ENCODE measurements at regions of chr4 and their contacts with region 1.

Region 1: GRCh38 chr4:119233750-119234149 is 21.2 kb downstream of the USP53 start:
- DNase-seq: no peak
- ATAC-seq: peak; percentile 55
- H3K4me3 ChIP-seq: no peak overlapping the region
- H3K4me3 Mint-ChIP-seq: peak overlapping the region; percentile 19
- H3K27ac ChIP-seq: no peak overlapping the region
- H3K27ac Mint-ChIP-seq: peak overlapping the region; percentile 66
- H3K4me1 ChIP-seq: peaks cover 18% of the 10 kb centered on the region
- H3K4me1 Mint-ChIP-seq: peaks cover 81% of the 10 kb centered on the region
- H3K27me3 ChIP-seq: no peaks in the 10 kb centered on the region
- H3K27me3 Mint-ChIP-seq: no peaks in the 10 kb centered on the region
- CTCF ChIP-seq: no peak

Region 2: DNA sequence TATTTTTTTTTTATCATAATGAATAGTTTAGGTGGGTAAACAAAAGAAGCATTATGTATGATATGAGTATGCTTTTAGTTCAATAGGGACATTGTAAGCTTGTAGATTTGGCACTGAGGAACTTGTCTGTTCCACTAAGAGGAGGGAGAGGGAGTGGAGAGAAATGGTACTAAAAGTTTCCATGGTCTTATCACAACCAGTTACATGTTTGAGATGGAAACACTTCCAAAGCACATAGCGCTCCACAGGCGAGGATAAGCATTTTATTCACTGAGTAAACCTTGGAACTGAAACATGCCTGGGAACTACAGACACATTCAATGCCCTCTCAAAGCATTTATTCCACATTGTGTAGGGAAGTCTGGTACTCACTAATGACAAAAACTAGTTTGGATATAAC is 82.6 kb before region 1 on chr4:
- CTCF ChIA-PET with region 1: no interaction called
- POLR2A ChIA-PET with region 1: no interaction called
- intact Hi-C with region 1: no loop called
- DNase-seq: no peak
- ATAC-seq: no peak
- H3K4me3 ChIP-seq: no peak overlapping the region
- H3K4me3 Mint-ChIP-seq: no peak overlapping the region
- H3K27ac ChIP-seq: no peak overlapping the region
- H3K27ac Mint-ChIP-seq: no peak overlapping the region
- H3K4me1 ChIP-seq: no peaks in the 10 kb centered on the region
- H3K4me1 Mint-ChIP-seq: no peaks in the 10 kb centered on the region
- H3K27me3 ChIP-seq: no peaks in the 10 kb centered on the region
- H3K27me3 Mint-ChIP-seq: peaks cover 6% of the 10 kb centered on the region
- CTCF ChIP-seq: no peak

Region 3: GRCh38 chr4:119268451-119268850 is 34.7 kb after region 1 on chr4:
- CTCF ChIA-PET with region 1: no interaction called
- POLR2A ChIA-PET with region 1: no interaction called
- intact Hi-C with region 1: loop called in 1 of 2 experiments (anchors 5 kb)
- DNase-seq: no peak
- ATAC-seq: no peak
- H3K4me3 ChIP-seq: no peak overlapping the region
- H3K4me3 Mint-ChIP-seq: no peak overlapping the region
- H3K27ac ChIP-seq: no peak overlapping the region
- H3K27ac Mint-ChIP-seq: no peak overlapping the region
- H3K4me1 ChIP-seq: peaks cover 6% of the 10 kb centered on the region
- H3K4me1 Mint-ChIP-seq: peaks cover 6% of the 10 kb centered on the region
- H3K27me3 ChIP-seq: no peaks in the 10 kb centered on the region
- H3K27me3 Mint-ChIP-seq: no peaks in the 10 kb centered on the region
- CTCF ChIP-seq: no peak

Region 4: GRCh38 chr4:120163895-120164294 is 930.1 kb after region 1 on chr4:
- CTCF ChIA-PET with region 1: no interaction called
- POLR2A ChIA-PET with region 1: no interaction called
- intact Hi-C with region 1: no loop called
- DNase-seq: no peak
- ATAC-seq: no peak
- H3K4me3 ChIP-seq: no peak overlapping the region
- H3K4me3 Mint-ChIP-seq: no peak overlapping the region
- H3K27ac ChIP-seq: no peak overlapping the region
- H3K27ac Mint-ChIP-seq: no peak overlapping the region
- H3K4me1 ChIP-seq: no peaks in the 10 kb centered on the region
- H3K4me1 Mint-ChIP-seq: no peaks in the 10 kb centered on the region
- H3K27me3 ChIP-seq: peaks cover 0 to 4% of the 10 kb centered on the region in 2 experiments
- H3K27me3 Mint-ChIP-seq: no peaks in the 10 kb centered on the region
- CTCF ChIP-seq: no peak